Heart right ventricle (tissue), 16 donors: ENCODE measurements at regions of chr3 and their contacts with region 1.

Region 1: DNA sequence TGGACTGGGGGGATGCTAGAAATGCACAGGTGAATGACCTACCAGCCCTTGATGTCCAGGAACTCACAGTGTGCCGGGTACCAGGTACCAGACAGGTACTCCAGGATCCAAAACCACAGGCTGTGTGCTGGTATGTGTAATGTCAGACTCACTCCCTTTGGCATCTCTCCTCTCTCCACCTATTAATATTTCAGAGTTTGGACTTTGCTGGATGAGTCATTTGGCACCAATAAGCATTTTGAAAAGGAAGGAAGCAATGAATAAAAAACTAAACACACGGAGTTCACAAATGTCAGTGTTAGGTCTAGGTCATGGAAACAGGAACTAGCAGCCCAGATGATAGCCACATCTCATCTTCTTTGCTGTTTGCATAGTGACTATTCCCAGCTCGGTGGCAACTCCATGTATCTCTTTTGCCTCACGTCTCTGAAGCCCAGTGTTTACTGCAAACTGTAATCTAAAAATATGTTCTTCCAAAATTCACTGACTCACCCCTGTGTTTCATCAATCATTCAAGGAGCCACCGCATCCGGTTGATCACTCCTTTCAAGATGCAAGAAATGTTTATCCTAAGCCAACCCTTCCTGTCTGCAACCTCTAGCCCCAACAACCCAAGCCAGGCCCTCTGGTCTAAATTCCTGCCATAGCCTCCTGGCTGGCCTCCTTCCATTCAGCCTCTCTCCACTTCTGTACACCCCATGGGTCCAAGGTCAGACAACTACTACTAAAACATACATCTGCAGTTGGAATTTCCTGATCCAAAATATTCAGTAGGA is 8.4 kb downstream of the ITGB5 start:
- DNase-seq: peak in 1 of 2 donors; percentile 31
- ATAC-seq: peak; percentile 50 to 89 (median 78)
- H3K4me3 ChIP-seq: no peak overlapping the region
- H3K27ac ChIP-seq: peak overlapping the region; percentile 1 to 84 (median 64)
- H3K4me1 ChIP-seq: peaks cover 28 to 83% (median 68%) of the 10 kb centered on the region in 9 donors
- H3K27me3 ChIP-seq: no peaks in the 10 kb centered on the region
- CTCF ChIP-seq: no peak

Region 2: GRCh38 chr3:124722589-124722988 is 156.2 kb before region 1 on chr3:
- intact Hi-C with region 1: no loop called
- DNase-seq: no peak
- ATAC-seq: no peak
- H3K4me3 ChIP-seq: no peak overlapping the region
- H3K27ac ChIP-seq: no peak overlapping the region
- H3K4me1 ChIP-seq: no peaks in the 10 kb centered on the region
- H3K27me3 ChIP-seq: peaks cover 0 to 41% (median 0%) of the 10 kb centered on the region in 7 donors
- CTCF ChIP-seq: no peak

Region 3: DNA sequence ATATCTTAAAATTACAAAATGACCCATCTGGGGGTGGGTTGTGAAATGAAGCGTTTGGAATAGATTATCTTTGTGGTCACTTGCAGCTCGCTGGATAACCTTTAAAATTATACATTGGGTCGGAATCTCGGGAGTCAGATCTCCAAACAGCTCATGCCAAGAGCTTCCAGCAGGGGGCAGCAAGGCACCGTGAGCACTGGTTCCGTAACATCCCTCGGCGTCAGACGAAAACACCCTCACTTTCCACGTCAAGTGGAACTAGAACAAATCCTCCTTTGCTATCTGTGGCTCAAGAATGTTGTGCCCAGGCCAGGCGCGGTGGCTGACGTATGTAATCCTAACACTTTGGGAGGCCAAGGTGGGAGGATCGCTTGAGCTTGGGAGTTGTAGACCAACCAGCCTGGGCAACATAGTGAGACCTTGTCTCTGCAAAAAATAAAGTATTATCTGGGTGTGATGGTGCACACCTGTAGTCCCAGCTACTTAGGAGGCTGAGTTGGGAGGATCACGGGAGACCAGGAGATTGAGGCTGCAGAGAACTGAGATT is 117.4 kb before region 1 on chr3:
- intact Hi-C with region 1: no loop called
- DNase-seq: peak; percentile 88 to 89
- ATAC-seq: peak; percentile 87 to 94 (median 89)
- H3K4me3 ChIP-seq: no peak overlapping the region
- H3K27ac ChIP-seq: peak overlapping the region in 6 of 10 donors; percentile 4 to 64 (median 52)
- H3K4me1 ChIP-seq: peaks cover 0 to 22% (median 13%) of the 10 kb centered on the region in 9 donors
- H3K27me3 ChIP-seq: no peaks in the 10 kb centered on the region
- CTCF ChIP-seq: peak; percentile 96 to 99 (median 97)

Region 4: GRCh38 chr3:124811436-124811835 is 67.3 kb before region 1 on chr3:
- intact Hi-C with region 1: no loop called
- DNase-seq: peak in 1 of 2 donors; percentile 58
- ATAC-seq: peak in 6 of 8 donors; percentile 28 to 40 (median 35)
- H3K4me3 ChIP-seq: no peak overlapping the region
- H3K27ac ChIP-seq: peak overlapping the region in 9 of 10 donors; percentile 36 to 86 (median 78)
- H3K4me1 ChIP-seq: peaks cover 17 to 66% (median 47%) of the 10 kb centered on the region in 9 donors
- H3K27me3 ChIP-seq: no peaks in the 10 kb centered on the region
- CTCF ChIP-seq: no peak

Region 5: DNA sequence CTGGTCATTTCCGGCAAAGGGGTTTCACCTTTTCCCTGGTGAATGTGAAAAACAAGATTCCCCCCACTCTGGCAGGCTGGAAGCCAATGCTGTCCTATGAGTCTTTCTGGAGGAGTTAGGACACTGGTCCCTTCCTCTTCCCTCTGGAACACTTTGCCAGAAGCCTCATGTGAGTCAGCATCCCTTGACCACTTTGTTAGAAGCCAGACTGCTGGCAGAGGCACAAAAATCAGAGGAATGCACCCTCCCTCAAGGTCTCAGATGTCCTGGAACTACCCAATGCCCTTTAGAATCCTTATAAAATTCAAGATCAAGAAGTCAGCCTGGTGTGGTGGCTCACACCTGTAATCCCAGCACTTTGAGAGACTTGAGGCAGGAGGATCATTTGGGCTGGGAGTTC is 18.1 kb before region 1 on chr3:
- intact Hi-C with region 1: loop called in 2 of 10 experiments (anchors 2 kb)
- DNase-seq: peak; percentile 29 to 86
- ATAC-seq: peak; percentile 86 to 98 (median 89)
- H3K4me3 ChIP-seq: no peak overlapping the region
- H3K27ac ChIP-seq: peak overlapping the region in 9 of 10 donors; percentile 55 to 76 (median 73)
- H3K4me1 ChIP-seq: peaks cover 8 to 61% (median 50%) of the 10 kb centered on the region in 9 donors
- H3K27me3 ChIP-seq: no peaks in the 10 kb centered on the region
- CTCF ChIP-seq: no peak

Region 6: GRCh38 chr3:124923833-124924232 is 45.1 kb after region 1 on chr3:
- intact Hi-C with region 1: no loop called
- DNase-seq: no peak
- ATAC-seq: no peak
- H3K4me3 ChIP-seq: no peak overlapping the region
- H3K27ac ChIP-seq: no peak overlapping the region
- H3K4me1 ChIP-seq: peaks cover 0 to 13% (median 0%) of the 10 kb centered on the region in 9 donors
- H3K27me3 ChIP-seq: no peaks in the 10 kb centered on the region
- CTCF ChIP-seq: peak in 3 of 9 donors; percentile 6 to 16 (median 7)